CD8-positive, alpha-beta T cell (primary cell): ENCODE measurements at regions of chr17 and their contacts with region 1.

Region 1: GRCh38 chr17:64129764-64130558 is at the start of gene ERN1:
- DNase-seq: peak; percentile 83 to 96 (median 90)
- ATAC-seq: peak; percentile 90
- H3K4me3 ChIP-seq: peak within 1 kb of the TSS; percentile 70 to 76
- H3K4me3 Mint-ChIP-seq: peak within 1 kb of the TSS; percentile 89
- H3K27ac ChIP-seq: peak within 1 kb of the TSS; percentile 82 to 96
- H3K27ac Mint-ChIP-seq: peak within 1 kb of the TSS; percentile 97
- H3K4me1 ChIP-seq: peaks cover 23% of the 10 kb centered on the region
- H3K4me1 Mint-ChIP-seq: peaks cover 46% of the 10 kb centered on the region
- H3K27me3 ChIP-seq: no peaks in the 10 kb centered on the region
- H3K27me3 Mint-ChIP-seq: no peaks in the 10 kb centered on the region
- CTCF ChIP-seq: no peak
- total RNA-seq, gene ERN1: 57.1 to 64.0 TPM

Region 2: DNA sequence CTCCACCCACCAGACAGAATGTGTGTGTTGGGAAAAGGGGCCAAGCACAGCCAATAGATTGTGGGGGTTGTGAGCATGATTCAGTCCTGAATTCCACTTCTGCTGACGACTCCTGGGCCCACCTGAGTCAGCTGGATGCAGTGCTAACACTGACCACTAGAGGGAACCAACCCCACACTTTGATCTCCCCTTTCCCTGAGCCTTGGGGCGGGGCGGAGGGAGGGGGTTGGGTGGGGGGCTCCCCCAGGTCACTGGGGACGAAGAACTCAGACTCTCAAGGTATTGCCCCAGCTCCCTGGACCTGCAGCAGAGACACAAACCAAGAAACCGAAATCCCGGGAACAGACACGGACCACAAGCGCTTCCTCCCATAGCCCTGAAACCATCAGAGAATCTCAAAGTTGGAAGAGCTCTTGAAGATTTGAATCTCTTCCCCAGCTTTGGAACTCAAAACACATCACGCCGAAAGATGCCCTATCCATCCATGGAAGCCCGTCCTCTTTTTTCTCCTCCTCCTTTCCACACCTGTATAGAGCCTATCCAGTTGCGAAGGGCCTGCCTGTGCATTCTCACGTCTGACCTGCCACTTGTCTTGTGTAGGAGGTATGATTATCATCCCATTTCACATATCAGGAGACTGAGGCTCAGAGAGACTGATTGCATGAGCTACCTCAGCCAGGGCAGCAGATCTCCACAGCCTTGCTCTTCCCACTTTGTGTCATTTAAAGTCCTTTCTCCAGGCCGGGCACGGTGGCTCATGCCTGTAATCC is 218.1 kb before region 1 on chr17:
- CTCF ChIA-PET with region 1: interaction called, 97 read pairs
- POLR2A ChIA-PET with region 1: no interaction called
- intact Hi-C with region 1: loop called in 1 of 2 experiments (anchors 2 kb)
- DNase-seq: peak; percentile 35 to 78 (median 72)
- ATAC-seq: peak; percentile 94
- H3K4me3 ChIP-seq: no peak overlapping the region
- H3K4me3 Mint-ChIP-seq: no peak overlapping the region
- H3K27ac ChIP-seq: no peak overlapping the region
- H3K27ac Mint-ChIP-seq: no peak overlapping the region
- H3K4me1 ChIP-seq: no peaks in the 10 kb centered on the region
- H3K4me1 Mint-ChIP-seq: peaks cover 2% of the 10 kb centered on the region
- H3K27me3 ChIP-seq: no peaks in the 10 kb centered on the region
- H3K27me3 Mint-ChIP-seq: peaks cover 4% of the 10 kb centered on the region
- CTCF ChIP-seq: peak; percentile 77

Region 3: GRCh38 chr17:63984651-63985386 is 145.1 kb before region 1 on chr17:
- CTCF ChIA-PET with region 1: interaction called, 14 read pairs
- POLR2A ChIA-PET with region 1: no interaction called
- intact Hi-C with region 1: no loop called
- DNase-seq: peak in 7 of 9 experiments; percentile 29 to 85 (median 65)
- ATAC-seq: peak; percentile 94
- H3K4me3 ChIP-seq: no peak overlapping the region
- H3K4me3 Mint-ChIP-seq: no peak overlapping the region
- H3K27ac ChIP-seq: peak overlapping the region in 1 of 2 experiments; percentile 52
- H3K27ac Mint-ChIP-seq: peak overlapping the region; percentile 33
- H3K4me1 ChIP-seq: peaks cover 7% of the 10 kb centered on the region
- H3K4me1 Mint-ChIP-seq: peaks cover 21% of the 10 kb centered on the region
- H3K27me3 ChIP-seq: no peaks in the 10 kb centered on the region
- H3K27me3 Mint-ChIP-seq: no peaks in the 10 kb centered on the region
- CTCF ChIP-seq: no peak

Region 4: GRCh38 chr17:64051153-64051552 is 78.8 kb before region 1 on chr17:
- CTCF ChIA-PET with region 1: interaction called, 93 read pairs
- POLR2A ChIA-PET with region 1: interaction called, 14 read pairs
- intact Hi-C with region 1: loop called in 1 of 2 experiments (anchors 1 kb)
- DNase-seq: peak in 3 of 9 experiments; percentile 10 to 78 (median 67)
- ATAC-seq: peak; percentile 99
- H3K4me3 ChIP-seq: no peak overlapping the region
- H3K4me3 Mint-ChIP-seq: no peak overlapping the region
- H3K27ac ChIP-seq: peak overlapping the region; percentile 6 to 70
- H3K27ac Mint-ChIP-seq: peak overlapping the region; percentile 88
- H3K4me1 ChIP-seq: peaks cover 26% of the 10 kb centered on the region
- H3K4me1 Mint-ChIP-seq: peaks cover 35% of the 10 kb centered on the region
- H3K27me3 ChIP-seq: no peaks in the 10 kb centered on the region
- H3K27me3 Mint-ChIP-seq: no peaks in the 10 kb centered on the region
- CTCF ChIP-seq: no peak

Region 5: GRCh38 chr17:64081802-64082799 is 47.9 kb before region 1 on chr17:
- CTCF ChIA-PET with region 1: interaction called, 13 read pairs
- POLR2A ChIA-PET with region 1: interaction called, 9 read pairs
- intact Hi-C with region 1: loop called (anchors 1 to 5 kb)
- DNase-seq: peak in 5 of 9 experiments; percentile 17 to 68 (median 48)
- ATAC-seq: peak; percentile 83
- H3K4me3 ChIP-seq: peak overlapping the region in 1 of 2 experiments; percentile 10
- H3K4me3 Mint-ChIP-seq: peak overlapping the region; percentile 35
- H3K27ac ChIP-seq: peak overlapping the region in 1 of 2 experiments; percentile 50
- H3K27ac Mint-ChIP-seq: peak overlapping the region; percentile 66
- H3K4me1 ChIP-seq: peaks cover 37% of the 10 kb centered on the region
- H3K4me1 Mint-ChIP-seq: peaks cover 14% of the 10 kb centered on the region
- H3K27me3 ChIP-seq: no peaks in the 10 kb centered on the region
- H3K27me3 Mint-ChIP-seq: no peaks in the 10 kb centered on the region
- CTCF ChIP-seq: no peak

Region 6: GRCh38 chr17:64262417-64263260 is 132.7 kb after region 1 on chr17 and contains the start of gene TEX2:
- CTCF ChIA-PET with region 1: interaction called, 3 read pairs
- POLR2A ChIA-PET with region 1: no interaction called
- intact Hi-C with region 1: loop called (anchors 1 to 5 kb)
- DNase-seq: peak; percentile 39 to 87 (median 67)
- ATAC-seq: peak; percentile 32
- H3K4me3 ChIP-seq: peak within 1 kb of the TSS; percentile 64 to 82
- H3K4me3 Mint-ChIP-seq: peak within 1 kb of the TSS; percentile 89
- H3K27ac ChIP-seq: peak within 1 kb of the TSS; percentile 67 to 74
- H3K27ac Mint-ChIP-seq: peak within 1 kb of the TSS; percentile 93
- H3K4me1 ChIP-seq: peaks cover 21% of the 10 kb centered on the region
- H3K4me1 Mint-ChIP-seq: peaks cover 37% of the 10 kb centered on the region
- H3K27me3 ChIP-seq: no peaks in the 10 kb centered on the region
- H3K27me3 Mint-ChIP-seq: no peaks in the 10 kb centered on the region
- CTCF ChIP-seq: no peak
- total RNA-seq, gene TEX2: 4.8 to 5.6 TPM

Region 7: DNA sequence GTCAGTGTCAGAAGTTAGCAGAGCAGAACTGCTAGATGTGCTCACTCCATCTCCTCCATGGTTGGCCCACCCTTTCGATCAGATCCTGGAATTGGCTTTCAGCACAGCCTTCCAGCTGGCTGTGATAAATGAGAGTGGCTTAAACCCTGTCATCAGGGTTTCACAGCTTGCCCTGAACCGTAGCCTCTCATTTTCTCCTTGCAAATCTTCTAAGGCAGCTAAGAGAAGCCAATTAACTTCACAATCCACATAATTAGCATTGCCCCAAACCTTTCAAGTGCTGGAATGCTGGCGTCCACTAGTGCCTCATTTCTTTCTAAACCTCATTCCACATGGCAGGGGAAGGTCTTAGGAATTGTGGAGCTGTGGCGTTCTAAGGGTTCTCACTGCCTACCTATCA is 340.7 kb after region 1 on chr17:
- CTCF ChIA-PET with region 1: no interaction called
- POLR2A ChIA-PET with region 1: no interaction called
- intact Hi-C with region 1: no loop called
- DNase-seq: no peak
- ATAC-seq: no peak
- H3K4me3 ChIP-seq: no peak overlapping the region
- H3K4me3 Mint-ChIP-seq: no peak overlapping the region
- H3K27ac ChIP-seq: no peak overlapping the region
- H3K27ac Mint-ChIP-seq: no peak overlapping the region
- H3K4me1 ChIP-seq: no peaks in the 10 kb centered on the region
- H3K4me1 Mint-ChIP-seq: no peaks in the 10 kb centered on the region
- H3K27me3 ChIP-seq: no peaks in the 10 kb centered on the region
- H3K27me3 Mint-ChIP-seq: no peaks in the 10 kb centered on the region
- CTCF ChIP-seq: no peak